ENCODE measurements at regions of chr19 and their contacts with region 1.

Region 1: GRCh38 chr19:35352448-35353304 is 5.0 kb downstream of the FFAR1 start:
- DNase-seq: peak; percentile 58 to 89
- ATAC-seq: peak; percentile 74 to 84 (median 77)
- H3K4me3 ChIP-seq: no peak overlapping the region
- H3K4me3 Mint-ChIP-seq: no peak overlapping the region
- H3K27ac ChIP-seq: no peak overlapping the region
- H3K27ac Mint-ChIP-seq: peak overlapping the region in 1 of 2 donors; percentile 59
- H3K4me1 ChIP-seq: peaks cover 20% of the 10 kb centered on the region
- H3K4me1 Mint-ChIP-seq: peaks cover 10% of the 10 kb centered on the region in 2 donors
- H3K27me3 ChIP-seq: no peaks in the 10 kb centered on the region
- H3K27me3 Mint-ChIP-seq: peaks cover 7 to 9% of the 10 kb centered on the region in 2 donors
- CTCF ChIP-seq: peak; percentile 89

Region 2: DNA sequence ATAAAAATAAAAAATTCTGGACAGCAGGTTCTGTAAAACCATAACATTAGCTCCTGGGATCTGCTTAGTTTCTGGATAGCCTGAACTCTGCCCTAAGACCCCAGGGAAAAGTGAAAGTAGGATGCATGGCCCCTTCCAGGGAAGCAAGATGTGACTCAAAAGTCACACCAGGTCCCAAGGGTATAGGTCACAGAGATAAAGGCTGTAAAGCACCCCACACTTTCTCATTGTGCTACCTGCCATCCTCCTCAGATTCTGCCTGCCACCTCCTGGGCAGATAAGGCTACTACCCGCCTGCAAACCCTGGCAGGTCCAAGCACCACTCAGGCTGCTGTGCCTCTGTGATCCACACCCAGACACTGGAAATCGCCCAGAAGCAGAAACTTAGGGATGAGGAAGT is 116.0 kb after region 1 on chr19:
- intact Hi-C with region 1: loop called (anchors 1 kb)
- DNase-seq: peak; percentile 58 to 84
- ATAC-seq: peak; percentile 96 to 100 (median 100)
- H3K4me3 ChIP-seq: no peak overlapping the region
- H3K4me3 Mint-ChIP-seq: no peak overlapping the region
- H3K27ac ChIP-seq: no peak overlapping the region
- H3K27ac Mint-ChIP-seq: no peak overlapping the region
- H3K4me1 ChIP-seq: peaks cover 10% of the 10 kb centered on the region
- H3K4me1 Mint-ChIP-seq: peaks cover under 1 to 13% of the 10 kb centered on the region in 2 donors
- H3K27me3 ChIP-seq: no peaks in the 10 kb centered on the region
- H3K27me3 Mint-ChIP-seq: no peaks in the 10 kb centered on the region
- CTCF ChIP-seq: peak; percentile 72

Region 3: GRCh38 chr19:35495107-35496064 is 142.7 kb after region 1 on chr19:
- intact Hi-C with region 1: loop called (anchors 1 kb)
- DNase-seq: peak; percentile 55 to 80
- ATAC-seq: peak; percentile 90 to 100 (median 99)
- H3K4me3 ChIP-seq: no peak overlapping the region
- H3K4me3 Mint-ChIP-seq: no peak overlapping the region
- H3K27ac ChIP-seq: no peak overlapping the region
- H3K27ac Mint-ChIP-seq: no peak overlapping the region
- H3K4me1 ChIP-seq: peaks cover 8% of the 10 kb centered on the region
- H3K4me1 Mint-ChIP-seq: peaks cover 0 to 10% of the 10 kb centered on the region in 2 donors
- H3K27me3 ChIP-seq: no peaks in the 10 kb centered on the region
- H3K27me3 Mint-ChIP-seq: peaks cover 0 to 14% of the 10 kb centered on the region in 2 donors
- CTCF ChIP-seq: peak; percentile 97

Region 4: DNA sequence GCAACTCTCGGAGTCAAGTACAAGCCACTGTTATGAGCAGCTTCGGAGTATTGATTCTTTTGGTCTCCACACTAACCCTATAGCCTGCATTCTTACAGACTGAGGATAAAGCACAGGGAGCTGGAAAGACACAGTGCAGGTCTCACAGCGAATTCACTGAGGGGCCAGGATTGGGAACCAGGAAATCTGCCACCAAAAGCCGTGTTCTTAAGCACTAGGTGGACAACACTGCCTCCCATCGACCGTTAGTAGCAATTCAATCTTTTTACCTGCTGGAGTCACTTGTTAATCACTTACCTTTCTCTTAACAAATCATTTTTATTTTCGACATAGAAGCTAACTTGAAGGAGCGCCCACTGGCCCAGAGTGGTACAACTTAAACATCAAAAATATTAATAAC is 239.6 kb after region 1 on chr19:
- intact Hi-C with region 1: loop called (anchors 10 kb)
- DNase-seq: peak in 1 of 2 donors; percentile 76
- ATAC-seq: peak in 2 of 3 donors; percentile 43 to 52
- H3K4me3 ChIP-seq: no peak overlapping the region
- H3K4me3 Mint-ChIP-seq: no peak overlapping the region
- H3K27ac ChIP-seq: no peak overlapping the region
- H3K27ac Mint-ChIP-seq: no peak overlapping the region
- H3K4me1 ChIP-seq: no peaks in the 10 kb centered on the region
- H3K4me1 Mint-ChIP-seq: peaks cover 0 to 6% of the 10 kb centered on the region in 2 donors
- H3K27me3 ChIP-seq: no peaks in the 10 kb centered on the region
- H3K27me3 Mint-ChIP-seq: peaks cover 5 to 10% of the 10 kb centered on the region in 2 donors
- CTCF ChIP-seq: peak; percentile 53